Ascending aorta (tissue), 2 donors: ENCODE measurements at regions of chr5 and their contacts with region 1.

Region 1: GRCh38 chr5:96662725-96663513 is 743 bp downstream of the CAST start:
- DNase-seq: peak; percentile 85 to 97
- H3K4me3 ChIP-seq: peak overlapping the region; percentile 81 to 87
- H3K27ac ChIP-seq: peak overlapping the region; percentile 95
- H3K4me1 ChIP-seq: peaks cover 0 to 13% of the 10 kb centered on the region in 2 donors
- H3K27me3 ChIP-seq: no peaks in the 10 kb centered on the region
- CTCF ChIP-seq: peak in 1 of 3 experiments; percentile 9

Region 2: GRCh38 chr5:95858661-95859326 is 804.1 kb before region 1 on chr5:
- intact Hi-C with region 1: loop called (anchors 5 kb)
- DNase-seq: peak; percentile 91 to 99
- H3K4me3 ChIP-seq: peak overlapping the region; percentile 32 to 55
- H3K27ac ChIP-seq: peak overlapping the region; percentile 93 to 96
- H3K4me1 ChIP-seq: peaks cover 28 to 53% of the 10 kb centered on the region in 2 donors
- H3K27me3 ChIP-seq: no peaks in the 10 kb centered on the region
- CTCF ChIP-seq: peak; percentile 98 to 99 (median 99)

Region 3: DNA sequence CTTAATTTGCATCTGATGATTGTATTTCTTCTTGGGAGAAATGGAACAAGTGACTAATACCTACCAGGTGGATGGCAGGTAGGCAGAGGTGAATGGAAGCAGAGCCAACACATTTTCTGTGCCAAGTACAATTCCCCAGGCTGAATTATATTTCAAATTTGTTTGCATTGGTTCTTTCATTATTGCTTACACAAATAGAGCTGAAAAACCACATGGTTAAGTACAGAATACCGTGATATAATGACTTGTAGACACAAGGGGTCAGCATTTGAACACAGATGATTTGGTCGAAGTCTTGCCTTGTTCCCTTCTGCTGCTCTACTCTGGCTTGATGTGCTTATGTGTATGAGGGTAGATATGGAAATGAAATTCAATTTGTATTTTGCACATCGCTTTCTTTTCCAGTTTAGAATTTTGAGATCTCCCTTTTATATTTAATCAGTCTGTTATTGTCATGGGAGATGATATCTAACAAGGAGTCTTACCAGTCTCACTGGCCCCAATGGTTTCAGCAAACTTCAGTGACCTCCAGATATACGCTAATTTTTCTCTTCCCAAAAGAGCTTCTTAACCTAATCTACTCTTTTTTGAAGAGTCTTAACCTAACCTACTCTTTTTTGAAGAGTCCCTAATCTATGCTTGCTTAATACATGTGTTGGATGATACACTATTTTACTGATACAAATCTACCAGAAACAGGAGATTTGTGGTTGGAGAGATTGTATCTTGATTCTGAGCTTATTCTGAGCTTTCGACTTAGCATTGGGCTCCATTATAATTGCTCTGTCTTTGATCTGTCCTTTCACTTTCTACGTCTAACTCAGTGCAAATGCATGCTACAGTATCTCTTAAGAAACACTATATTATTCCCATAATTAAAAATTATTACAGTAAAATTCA is 318.0 kb before region 1 on chr5:
- intact Hi-C with region 1: loop called (anchors 5 kb)
- DNase-seq: no peak
- H3K4me3 ChIP-seq: no peak overlapping the region
- H3K27ac ChIP-seq: no peak overlapping the region
- H3K4me1 ChIP-seq: peaks cover 0 to 12% of the 10 kb centered on the region in 2 donors
- H3K27me3 ChIP-seq: no peaks in the 10 kb centered on the region
- CTCF ChIP-seq: peak; percentile 62 to 76 (median 66)

Region 4: DNA sequence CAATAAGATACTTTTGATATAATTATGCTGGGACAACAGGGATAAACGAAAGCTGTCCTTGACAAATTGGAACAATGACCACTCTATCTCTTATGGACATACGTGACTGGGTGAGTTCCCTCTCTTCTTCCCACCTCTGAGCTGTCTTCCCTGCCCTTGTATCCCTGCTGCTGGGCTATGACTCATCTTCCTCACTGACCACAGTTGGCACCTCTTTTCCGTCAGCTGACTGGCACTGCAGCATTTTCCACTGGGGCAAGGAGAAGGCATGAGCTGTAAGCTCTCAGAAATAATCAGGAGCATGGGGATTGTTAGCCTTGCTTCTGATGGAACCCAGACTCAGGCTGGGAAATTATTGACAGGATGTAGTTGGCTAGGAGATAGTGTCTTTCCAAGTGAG is 278.6 kb before region 1 on chr5:
- intact Hi-C with region 1: no loop called
- DNase-seq: peak in 1 of 2 donors; percentile 76
- H3K4me3 ChIP-seq: no peak overlapping the region
- H3K27ac ChIP-seq: no peak overlapping the region
- H3K4me1 ChIP-seq: no peaks in the 10 kb centered on the region
- H3K27me3 ChIP-seq: no peaks in the 10 kb centered on the region
- CTCF ChIP-seq: no peak

Region 5: GRCh38 chr5:96641368-96642228 is 21.3 kb before region 1 on chr5:
- intact Hi-C with region 1: no loop called
- DNase-seq: no peak
- H3K4me3 ChIP-seq: no peak overlapping the region
- H3K27ac ChIP-seq: no peak overlapping the region
- H3K4me1 ChIP-seq: no peaks in the 10 kb centered on the region
- H3K27me3 ChIP-seq: no peaks in the 10 kb centered on the region
- CTCF ChIP-seq: no peak

Region 6: DNA sequence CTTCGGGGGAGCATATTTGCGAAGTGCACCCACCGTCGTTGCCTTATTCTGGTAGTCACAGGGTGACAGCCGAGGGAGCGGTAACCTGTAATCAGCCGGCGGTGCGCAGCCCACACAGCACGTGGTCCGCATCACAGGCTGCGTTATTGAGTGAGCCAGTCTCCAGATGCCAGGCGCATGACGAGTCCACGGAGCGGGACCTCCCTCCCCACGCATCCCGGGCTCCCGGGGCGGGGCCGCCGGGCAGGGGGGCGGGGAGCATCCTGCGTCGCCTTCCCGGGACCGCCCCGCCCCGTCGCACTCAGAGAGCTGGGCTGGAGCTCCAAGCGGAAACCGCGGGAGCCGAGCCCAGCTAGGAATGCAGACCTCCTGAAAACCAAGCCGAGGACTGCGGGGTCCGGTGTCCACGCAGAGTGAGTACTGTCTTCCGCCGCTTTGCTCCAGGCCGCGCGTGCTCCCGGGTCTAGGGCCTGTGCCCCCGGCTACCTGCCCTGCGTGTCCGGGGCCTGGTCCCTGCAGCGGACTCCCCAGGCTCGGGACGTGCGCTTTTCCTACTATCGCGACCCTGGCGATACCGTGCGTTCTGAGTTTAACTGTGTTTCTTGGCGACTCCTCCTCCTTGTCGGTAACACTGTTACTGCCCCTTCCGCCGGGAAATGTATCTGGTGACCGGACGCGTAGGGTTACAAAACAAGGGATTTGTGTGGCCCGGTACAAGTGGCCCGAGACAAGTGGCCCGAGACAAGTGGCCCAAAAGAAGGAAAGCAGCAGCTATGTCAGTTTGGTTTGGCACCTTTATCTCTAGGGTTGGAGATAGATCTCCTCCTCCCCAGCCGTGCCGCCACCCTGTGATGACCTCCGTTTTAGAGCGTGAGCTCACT is 39.8 kb after region 1 on chr5:
- intact Hi-C with region 1: loop called (anchors 1 kb)
- DNase-seq: peak; percentile 90 to 99
- H3K4me3 ChIP-seq: peak overlapping the region; percentile 63 to 75
- H3K27ac ChIP-seq: peak overlapping the region; percentile 90 to 94
- H3K4me1 ChIP-seq: peaks cover 0 to 21% of the 10 kb centered on the region in 2 donors
- H3K27me3 ChIP-seq: no peaks in the 10 kb centered on the region
- CTCF ChIP-seq: no peak

Region 7: GRCh38 chr5:96934708-96935558 is 272.0 kb after region 1 on chr5:
- intact Hi-C with region 1: loop called (anchors 5 kb)
- DNase-seq: peak; percentile 69 to 96
- H3K4me3 ChIP-seq: peak overlapping the region; percentile 90 to 95
- H3K27ac ChIP-seq: peak overlapping the region; percentile 92 to 94
- H3K4me1 ChIP-seq: peaks cover 4 to 13% of the 10 kb centered on the region in 2 donors
- H3K27me3 ChIP-seq: no peaks in the 10 kb centered on the region
- CTCF ChIP-seq: no peak